ENCODE measurements at regions of chr11 and their contacts with region 1.

Region 1: DNA sequence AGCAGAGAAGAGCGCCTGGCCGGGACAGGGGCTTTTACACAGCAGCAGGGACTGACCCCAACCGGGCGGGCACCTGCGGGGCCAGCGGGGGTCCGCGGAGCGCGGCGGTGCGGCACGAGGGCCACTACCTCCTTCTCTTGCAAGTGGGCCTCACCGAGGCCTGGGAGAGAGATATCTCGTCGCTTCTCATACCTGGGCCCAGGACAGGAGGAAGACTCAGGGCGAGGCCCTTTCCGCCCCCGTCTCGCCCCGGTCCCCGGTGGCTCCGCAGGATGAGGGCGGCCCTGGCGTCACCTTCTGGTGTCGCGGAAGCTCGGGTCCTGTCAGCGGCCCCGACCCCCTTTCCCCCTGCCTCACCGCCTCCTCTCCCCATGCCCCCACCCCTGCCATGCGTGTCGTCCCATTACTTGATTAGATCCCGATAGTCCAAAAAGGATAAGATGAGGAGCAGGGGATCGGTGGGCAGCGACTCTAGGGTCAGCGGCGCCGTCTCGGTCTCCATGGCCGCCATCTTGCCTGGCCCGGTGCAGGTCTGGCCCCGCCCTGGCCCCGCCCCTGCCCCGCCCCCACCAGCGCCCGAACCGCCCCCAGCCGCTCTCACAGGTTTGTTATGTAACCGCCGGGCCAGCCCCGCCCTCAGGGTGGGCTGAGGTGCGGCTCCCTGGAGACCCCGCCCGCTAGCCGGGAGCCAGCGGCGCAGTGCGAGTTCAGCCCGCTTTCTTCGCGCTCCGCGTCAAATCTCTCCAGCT is at the start of gene FBXO3:
- DNase-seq: peak; percentile 90 to 97
- H3K4me3 ChIP-seq: peak within 1 kb of the TSS; percentile 68 to 99 (median 94)
- H3K27ac ChIP-seq: peak within 1 kb of the TSS; percentile 80 to 92 (median 89)
- H3K4me1 ChIP-seq: peaks cover 18 to 53% (median 38%) of the 10 kb centered on the region in 4 donors
- H3K27me3 ChIP-seq: peaks cover 0 to 16% (median 0%) of the 10 kb centered on the region in 3 donors
- CTCF ChIP-seq: no peak
- EP300 ChIP-seq: no peak
- POLR2A ChIP-seq: no peak
- total RNA-seq, gene FBXO3: 4.9 to 63.0 (median 25.9) TPM

Region 2: DNA sequence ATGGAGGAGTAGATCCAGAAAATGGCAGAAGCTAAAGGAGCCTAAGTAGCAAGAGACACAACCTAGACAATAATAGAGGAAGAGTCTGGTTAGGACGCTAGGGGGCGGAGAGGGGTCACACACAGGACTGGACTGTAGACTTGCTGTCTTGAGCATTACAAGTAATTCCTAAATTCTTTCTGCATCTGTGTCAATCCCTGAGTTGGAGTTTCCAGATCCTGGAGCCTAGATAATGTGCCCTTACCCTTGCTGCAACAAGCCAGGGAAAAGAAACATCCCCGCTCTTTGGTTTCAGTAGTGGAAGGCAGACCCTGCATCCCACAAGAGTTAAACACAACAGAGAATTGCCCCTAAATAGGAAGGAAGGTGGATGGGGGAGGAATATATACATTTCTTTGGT is 964.8 kb before region 1 on chr11:
- intact Hi-C with region 1: no loop called
- DNase-seq: peak; percentile 73 to 86
- H3K4me3 ChIP-seq: no peak overlapping the region
- H3K27ac ChIP-seq: no peak overlapping the region
- H3K4me1 ChIP-seq: no peaks in the 10 kb centered on the region
- H3K27me3 ChIP-seq: no peaks in the 10 kb centered on the region
- CTCF ChIP-seq: peak in 5 of 7 experiments; percentile 25 to 51 (median 41)
- EP300 ChIP-seq: no peak
- POLR2A ChIP-seq: no peak

Region 3: GRCh38 chr11:33808228-33808828 is 34.2 kb after region 1 on chr11:
- intact Hi-C with region 1: no loop called
- DNase-seq: peak; percentile 86 to 92
- H3K4me3 ChIP-seq: no peak overlapping the region
- H3K27ac ChIP-seq: no peak overlapping the region
- H3K4me1 ChIP-seq: no peaks in the 10 kb centered on the region
- H3K27me3 ChIP-seq: peaks cover 0 to 16% (median 0%) of the 10 kb centered on the region in 3 donors
- CTCF ChIP-seq: peak in 5 of 7 experiments; percentile 83 to 94 (median 89)
- EP300 ChIP-seq: no peak
- POLR2A ChIP-seq: no peak

Region 4: GRCh38 chr11:34438529-34439507 is 664.7 kb after region 1 on chr11 and contains the start of gene CAT:
- intact Hi-C with region 1: loop called (anchors 10 kb)
- DNase-seq: peak; percentile 99
- H3K4me3 ChIP-seq: peak within 1 kb of the TSS; percentile 82 to 90 (median 84)
- H3K27ac ChIP-seq: peak within 1 kb of the TSS; percentile 89 to 97 (median 95)
- H3K4me1 ChIP-seq: peaks cover 14 to 45% (median 36%) of the 10 kb centered on the region in 4 donors
- H3K27me3 ChIP-seq: no peaks in the 10 kb centered on the region
- CTCF ChIP-seq: peak in 1 of 7 experiments; percentile 7
- EP300 ChIP-seq: no peak
- POLR2A ChIP-seq: peak in 1 of 4 donors; percentile 57
- total RNA-seq, gene CAT: 24.9 to 122 (median 75.3) TPM

Measured in stomach (tissue), 19 donors.